Caco-2 (cell line): ENCODE measurements at regions of chr19 and their contacts with region 1.

Region 1: GRCh38 chr19:56252699-56253422 is 19.7 kb upstream of the EDDM13 start:
- DNase-seq: peak; percentile 74 to 82
- H3K4me3 ChIP-seq: no peak overlapping the region
- H3K4me3 Mint-ChIP-seq: no peak overlapping the region
- H3K27ac Mint-ChIP-seq: no peak overlapping the region
- H3K4me1 ChIP-seq: no peaks in the 10 kb centered on the region
- H3K4me1 Mint-ChIP-seq: no peaks in the 10 kb centered on the region
- H3K27me3 ChIP-seq: no peaks in the 10 kb centered on the region
- H3K27me3 Mint-ChIP-seq: no peaks in the 10 kb centered on the region
- CTCF ChIP-seq: peak; percentile 69 to 70

Region 2: DNA sequence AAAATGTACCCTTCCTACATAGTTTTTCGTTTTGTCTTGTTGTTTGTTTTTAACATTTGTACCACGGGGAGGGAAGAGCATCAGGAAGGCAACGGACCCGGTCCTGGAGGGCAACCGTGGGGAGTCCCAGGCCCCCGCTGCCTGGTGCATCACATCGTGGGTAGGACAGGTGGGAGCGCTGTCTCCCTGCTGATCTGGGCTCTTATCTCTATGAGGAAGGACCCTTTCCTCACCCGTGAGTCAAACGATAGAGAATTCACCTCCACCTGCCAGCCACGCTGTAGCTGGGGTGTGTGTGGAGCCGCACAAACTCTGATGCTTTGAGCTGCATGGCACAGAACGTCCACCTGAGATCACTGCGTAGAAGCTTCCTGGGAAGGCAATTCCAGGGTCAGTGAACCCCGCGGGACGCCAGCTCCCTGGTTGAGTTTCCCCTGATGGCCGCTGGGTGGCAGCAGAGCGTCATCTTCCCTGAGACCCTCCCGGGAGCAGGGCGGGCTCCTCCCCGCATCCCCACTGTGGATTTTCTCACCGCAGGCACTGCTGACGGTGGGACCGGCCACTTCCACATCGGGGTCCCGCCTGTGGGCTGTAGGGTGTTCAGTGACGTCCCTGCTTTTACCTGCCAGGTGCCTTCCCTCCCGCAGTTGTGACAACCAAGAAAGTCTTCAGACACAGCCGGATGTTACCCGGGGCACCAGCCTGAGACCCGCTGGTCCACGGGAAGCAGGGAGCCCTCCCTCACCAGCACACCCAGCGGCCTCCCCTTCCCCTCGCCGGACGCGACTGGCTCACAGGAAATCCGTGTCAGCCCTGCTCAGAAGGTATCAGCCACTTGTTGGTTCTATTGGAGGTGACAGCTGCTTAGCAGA is 186.5 kb before region 1 on chr19:
- CTCF ChIA-PET with region 1: interaction called, 26 read pairs
- POLR2A ChIA-PET with region 1: no interaction called
- intact Hi-C with region 1: no loop called
- DNase-seq: peak; percentile 77 to 81
- H3K4me3 ChIP-seq: no peak overlapping the region
- H3K4me3 Mint-ChIP-seq: peak overlapping the region; percentile 52
- H3K27ac Mint-ChIP-seq: no peak overlapping the region
- H3K4me1 ChIP-seq: 0 out of 2 replicates have a peak, but pooled peaks cover 3% of the 10 kb centered on the region
- H3K4me1 Mint-ChIP-seq: no peaks in the 10 kb centered on the region
- H3K27me3 ChIP-seq: no peaks in the 10 kb centered on the region
- H3K27me3 Mint-ChIP-seq: peaks cover 18% of the 10 kb centered on the region
- CTCF ChIP-seq: peak; percentile 95 to 96

Region 3: DNA sequence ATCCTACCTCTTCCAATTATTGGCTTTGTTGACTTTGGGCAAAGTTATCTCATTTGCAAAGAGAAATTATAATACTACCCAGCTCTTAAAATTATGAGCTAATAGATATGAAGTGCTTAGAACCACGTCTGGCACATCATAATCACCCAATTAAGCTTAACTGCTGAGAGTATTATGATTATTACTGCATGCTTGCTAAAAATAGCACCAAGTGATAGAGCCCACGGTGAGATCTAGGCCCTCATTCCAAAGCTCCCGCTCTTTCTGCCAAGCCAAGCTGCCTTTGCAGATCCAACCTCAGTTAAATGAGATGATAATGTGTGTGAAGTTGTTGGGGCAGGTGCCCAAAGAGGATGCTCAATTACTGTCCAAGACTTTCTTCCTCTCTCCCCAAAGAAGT is 13.2 kb after region 1 on chr19:
- CTCF ChIA-PET with region 1: interaction called, 11 read pairs
- POLR2A ChIA-PET with region 1: no interaction called
- intact Hi-C with region 1: no loop called
- DNase-seq: no peak
- H3K4me3 ChIP-seq: no peak overlapping the region
- H3K4me3 Mint-ChIP-seq: no peak overlapping the region
- H3K27ac Mint-ChIP-seq: no peak overlapping the region
- H3K4me1 ChIP-seq: no peaks in the 10 kb centered on the region
- H3K4me1 Mint-ChIP-seq: peaks cover 6% of the 10 kb centered on the region
- H3K27me3 ChIP-seq: no peaks in the 10 kb centered on the region; the same call in 1 of the 2 replicates
- H3K27me3 Mint-ChIP-seq: no peaks in the 10 kb centered on the region
- CTCF ChIP-seq: no peak

Region 4: GRCh38 chr19:56314562-56315077 is 61.8 kb after region 1 on chr19 and contains the start of gene ZSCAN5A:
- CTCF ChIA-PET with region 1: interaction called, 31 read pairs
- POLR2A ChIA-PET with region 1: no interaction called
- intact Hi-C with region 1: loop called (anchors 1 kb)
- DNase-seq: peak; percentile 95 to 97
- H3K4me3 ChIP-seq: peak within 1 kb of the TSS; percentile 66
- H3K4me3 Mint-ChIP-seq: peak within 1 kb of the TSS; percentile 86
- H3K27ac Mint-ChIP-seq: peak within 1 kb of the TSS; percentile 98
- H3K4me1 ChIP-seq: peaks cover 9% of the 10 kb centered on the region; the same call in 1 of the 2 replicates
- H3K4me1 Mint-ChIP-seq: peaks cover 12% of the 10 kb centered on the region
- H3K27me3 ChIP-seq: no peaks in the 10 kb centered on the region
- H3K27me3 Mint-ChIP-seq: no peaks in the 10 kb centered on the region
- CTCF ChIP-seq: no peak
- total RNA-seq, gene ZSCAN5A: 10.9 and 11.3 TPM in 2 replicates

Region 5: GRCh38 chr19:56350416-56351045 is 97.7 kb after region 1 on chr19:
- CTCF ChIA-PET with region 1: no interaction called
- POLR2A ChIA-PET with region 1: no interaction called
- intact Hi-C with region 1: loop called (anchors 5 kb)
- DNase-seq: peak; percentile 45 to 46
- H3K4me3 ChIP-seq: no peak overlapping the region
- H3K4me3 Mint-ChIP-seq: no peak overlapping the region
- H3K27ac Mint-ChIP-seq: no peak overlapping the region
- H3K4me1 ChIP-seq: peaks cover under 1% of the 10 kb centered on the region; the same call in 1 of the 2 replicates
- H3K4me1 Mint-ChIP-seq: no peaks in the 10 kb centered on the region
- H3K27me3 ChIP-seq: no peaks in the 10 kb centered on the region
- H3K27me3 Mint-ChIP-seq: no peaks in the 10 kb centered on the region
- CTCF ChIP-seq: peak; percentile 71 to 74

Region 6: DNA sequence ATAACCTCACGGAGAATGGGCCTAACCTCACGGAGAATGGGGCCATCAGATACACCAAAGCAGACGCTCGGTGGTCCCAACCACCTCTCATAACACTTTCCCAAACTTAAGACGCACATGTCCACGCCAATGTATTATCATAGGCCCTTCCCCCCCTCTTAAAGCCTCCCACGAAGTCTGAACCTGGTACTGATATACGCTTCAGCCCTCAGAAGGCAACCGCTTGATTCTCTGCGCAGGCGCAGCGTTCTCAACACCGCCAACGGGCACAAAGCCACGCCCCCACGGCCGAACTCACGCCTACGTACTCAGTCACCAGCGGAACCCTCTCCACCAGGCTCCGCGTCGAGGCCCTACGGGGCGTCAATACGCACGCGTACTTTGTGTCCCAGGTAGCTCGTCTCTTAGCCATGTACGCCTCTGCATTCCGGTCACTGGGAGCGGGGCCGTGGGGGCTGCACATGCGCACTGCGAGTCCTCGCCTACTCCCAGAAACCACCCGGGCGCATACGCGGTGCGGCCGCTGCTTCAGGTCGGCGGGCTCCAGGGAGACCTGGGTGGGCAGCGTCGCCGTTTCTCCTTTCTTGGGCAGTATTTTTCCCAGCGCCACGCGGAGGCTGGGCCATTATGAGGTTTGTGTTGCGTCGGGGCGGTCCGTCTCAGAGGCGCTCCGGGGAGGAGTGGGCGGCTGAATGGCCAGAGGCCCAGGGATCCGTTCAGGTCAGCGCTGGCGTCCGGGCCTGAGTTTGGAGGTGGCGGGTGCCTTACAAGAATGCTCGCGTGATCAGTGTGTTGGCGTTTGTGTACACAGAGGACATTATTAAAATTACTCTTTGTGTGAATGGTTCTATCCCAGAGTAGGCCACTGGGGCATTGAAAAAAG is 115.2 kb after region 1 on chr19:
- CTCF ChIA-PET with region 1: no interaction called
- POLR2A ChIA-PET with region 1: no interaction called
- intact Hi-C with region 1: no loop called
- DNase-seq: no peak
- H3K4me3 ChIP-seq: no peak overlapping the region
- H3K4me3 Mint-ChIP-seq: no peak overlapping the region
- H3K27ac Mint-ChIP-seq: no peak overlapping the region
- H3K4me1 ChIP-seq: no peaks in the 10 kb centered on the region
- H3K4me1 Mint-ChIP-seq: no peaks in the 10 kb centered on the region
- H3K27me3 ChIP-seq: no peaks in the 10 kb centered on the region
- H3K27me3 Mint-ChIP-seq: no peaks in the 10 kb centered on the region
- CTCF ChIP-seq: no peak